Panc1 (cell line): ENCODE measurements at regions of chr9 and their contacts with region 1.

Region 1: GRCh38 chr9:33816327-33817252 is at the start of gene UBE2R2:
- DNase-seq: peak; percentile 59
- ATAC-seq: peak; percentile 85
- H3K4me3 ChIP-seq: peak within 1 kb of the TSS; percentile 71 to 96
- H3K27ac ChIP-seq: peak within 1 kb of the TSS; percentile 98
- H3K4me1 ChIP-seq: peaks cover 41% of the 10 kb centered on the region
- H3K27me3 ChIP-seq: no peaks in the 10 kb centered on the region
- CTCF ChIP-seq: no peak
- total RNA-seq, gene UBE2R2: 67.2 TPM

Region 2: DNA sequence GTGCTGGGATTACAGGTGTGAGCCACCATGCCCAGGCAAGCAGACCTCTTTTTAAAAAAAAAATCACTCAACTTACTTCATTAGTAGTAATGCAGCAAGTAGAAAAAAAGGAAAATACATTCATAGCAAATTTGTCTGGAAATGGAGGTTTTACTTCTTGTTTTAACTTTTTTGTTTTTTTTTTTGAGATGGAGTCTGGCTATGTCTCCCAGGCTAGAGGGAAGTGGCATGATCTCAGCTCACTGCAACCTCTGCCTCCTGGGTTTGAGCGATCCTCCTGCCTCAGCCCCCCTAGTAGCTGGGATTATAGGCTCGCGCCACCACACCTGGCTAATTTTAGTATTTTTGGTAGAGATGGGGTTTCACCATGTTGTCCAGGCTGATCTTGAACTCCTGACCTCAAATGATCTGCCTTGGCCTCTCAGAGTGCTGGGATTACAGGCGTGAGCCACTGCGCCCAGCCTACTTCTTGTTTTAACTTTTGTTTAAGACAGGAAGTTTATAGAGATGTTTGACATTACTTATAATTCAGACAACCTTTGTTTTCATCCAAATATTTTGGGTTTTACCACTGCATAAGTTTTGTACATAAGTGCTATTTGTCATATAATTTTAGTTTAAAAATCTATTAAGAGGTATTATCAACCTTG is 26.8 kb after region 1 on chr9:
- CTCF ChIA-PET with region 1: no interaction called
- POLR2A ChIA-PET with region 1: interaction called, 10 read pairs
- in situ Hi-C with region 1: no loop called
- intact Hi-C with region 1: no loop called
- DNase-seq: no peak
- ATAC-seq: no peak
- H3K4me3 ChIP-seq: no peak overlapping the region
- H3K27ac ChIP-seq: no peak overlapping the region
- H3K4me1 ChIP-seq: peaks cover 5% of the 10 kb centered on the region; the same call in 1 of the 2 replicates
- H3K27me3 ChIP-seq: no peaks in the 10 kb centered on the region
- CTCF ChIP-seq: no peak

Region 3: DNA sequence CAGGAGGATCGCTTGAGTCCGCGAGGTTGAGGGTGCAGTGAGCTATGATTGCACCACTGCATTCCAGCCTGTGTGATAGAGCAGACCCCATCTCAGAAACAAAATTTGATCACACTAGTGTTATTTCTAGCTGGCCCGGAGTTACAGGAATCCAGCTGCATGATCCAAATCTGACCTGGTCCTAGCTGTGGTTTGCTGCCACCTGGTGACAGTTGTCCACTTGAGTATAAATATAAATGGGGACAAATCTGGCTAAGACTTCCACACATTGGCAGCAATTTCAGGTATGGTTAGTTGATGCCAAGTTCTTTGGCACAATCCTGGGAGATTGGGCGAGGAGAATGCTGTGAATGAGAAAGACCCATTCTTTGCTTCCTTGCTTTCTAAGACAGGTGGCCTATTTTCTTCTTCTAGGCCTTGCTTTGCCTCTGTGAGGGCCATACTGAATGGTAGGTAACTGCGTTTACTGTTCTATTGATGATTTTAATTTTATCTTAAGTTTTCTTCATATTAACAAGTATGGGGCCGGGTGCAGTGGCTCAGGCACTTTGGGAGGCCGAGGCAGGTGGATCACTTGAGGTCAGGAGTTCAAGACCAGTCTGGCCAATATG is 35.7 kb after region 1 on chr9:
- CTCF ChIA-PET with region 1: interaction called, 26 read pairs
- POLR2A ChIA-PET with region 1: no interaction called
- in situ Hi-C with region 1: no loop called
- intact Hi-C with region 1: loop called (anchors 5 kb)
- DNase-seq: peak; percentile 47
- ATAC-seq: peak; percentile 86
- H3K4me3 ChIP-seq: no peak overlapping the region
- H3K27ac ChIP-seq: no peak overlapping the region
- H3K4me1 ChIP-seq: peaks cover 30% of the 10 kb centered on the region; the same call in 1 of the 2 replicates
- H3K27me3 ChIP-seq: no peaks in the 10 kb centered on the region
- CTCF ChIP-seq: peak; percentile 87

Region 4: DNA sequence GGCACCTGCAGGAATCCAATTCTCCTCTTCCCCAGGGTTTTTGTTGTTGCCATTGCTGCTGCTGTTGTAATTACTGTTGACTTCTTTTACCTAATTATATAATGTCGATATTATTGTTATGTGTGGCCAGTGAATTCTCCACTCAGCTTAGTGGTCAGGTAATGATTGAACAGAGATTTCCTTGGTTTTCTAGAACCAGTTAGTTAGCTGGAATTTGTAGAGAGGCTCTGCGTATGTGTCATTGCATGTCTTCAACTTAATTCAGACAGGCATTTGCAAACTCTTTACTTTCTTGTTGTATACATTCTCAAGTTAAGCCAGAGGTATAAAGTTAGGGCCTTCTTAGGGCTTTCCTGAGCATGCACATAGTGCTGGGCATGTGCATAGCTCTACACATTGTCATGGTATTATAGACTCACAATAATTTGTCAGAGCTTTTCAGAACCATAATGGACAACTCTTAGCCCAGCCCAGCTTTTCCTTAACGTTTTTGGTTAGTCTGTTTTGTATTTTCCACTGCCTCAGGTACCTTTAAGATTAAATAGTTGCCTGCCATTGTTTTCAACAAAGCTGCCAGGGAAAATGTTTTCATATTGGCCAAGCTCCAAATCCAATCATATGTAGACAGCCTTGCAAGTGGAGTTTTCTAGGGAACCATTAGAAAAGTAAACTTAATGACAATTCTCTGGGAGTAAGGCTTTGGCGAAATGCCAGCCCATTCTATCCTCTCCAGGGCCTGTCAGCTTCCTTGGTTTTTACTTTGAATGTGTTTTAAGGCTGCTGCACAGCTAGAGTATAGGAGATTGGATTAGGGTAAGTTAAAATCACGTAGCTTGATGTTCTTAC is 68.5 kb after region 1 on chr9:
- CTCF ChIA-PET with region 1: interaction called, 13 read pairs
- POLR2A ChIA-PET with region 1: interaction called, 8 read pairs
- in situ Hi-C with region 1: no loop called
- intact Hi-C with region 1: no loop called
- DNase-seq: no peak
- ATAC-seq: no peak; the same call in 1 of the 2 replicates
- H3K4me3 ChIP-seq: no peak overlapping the region
- H3K27ac ChIP-seq: no peak overlapping the region
- H3K4me1 ChIP-seq: peaks cover 22% of the 10 kb centered on the region
- H3K27me3 ChIP-seq: no peaks in the 10 kb centered on the region
- CTCF ChIP-seq: no peak

Region 5: GRCh38 chr9:33919276-33919897 is 102.8 kb after region 1 on chr9:
- CTCF ChIA-PET with region 1: interaction called, 9 read pairs
- POLR2A ChIA-PET with region 1: interaction called, 11 read pairs
- in situ Hi-C with region 1: no loop called
- intact Hi-C with region 1: loop called (anchors 10 kb)
- DNase-seq: no peak
- ATAC-seq: no peak
- H3K4me3 ChIP-seq: no peak overlapping the region
- H3K27ac ChIP-seq: no peak overlapping the region
- H3K4me1 ChIP-seq: peaks cover under 1% of the 10 kb centered on the region; the same call in 1 of the 2 replicates
- H3K27me3 ChIP-seq: no peaks in the 10 kb centered on the region
- CTCF ChIP-seq: no peak

Region 6: GRCh38 chr9:34072868-34073590 is 256.4 kb after region 1 on chr9:
- CTCF ChIA-PET with region 1: no interaction called
- POLR2A ChIA-PET with region 1: no interaction called
- in situ Hi-C with region 1: no loop called
- intact Hi-C with region 1: loop called (anchors 5 kb)
- DNase-seq: no peak
- ATAC-seq: no peak
- H3K4me3 ChIP-seq: no peak overlapping the region
- H3K27ac ChIP-seq: peak overlapping the region; percentile 27
- H3K4me1 ChIP-seq: 0 out of 2 replicates have a peak, but pooled peaks cover 6% of the 10 kb centered on the region
- H3K27me3 ChIP-seq: no peaks in the 10 kb centered on the region
- CTCF ChIP-seq: no peak

Region 7: DNA sequence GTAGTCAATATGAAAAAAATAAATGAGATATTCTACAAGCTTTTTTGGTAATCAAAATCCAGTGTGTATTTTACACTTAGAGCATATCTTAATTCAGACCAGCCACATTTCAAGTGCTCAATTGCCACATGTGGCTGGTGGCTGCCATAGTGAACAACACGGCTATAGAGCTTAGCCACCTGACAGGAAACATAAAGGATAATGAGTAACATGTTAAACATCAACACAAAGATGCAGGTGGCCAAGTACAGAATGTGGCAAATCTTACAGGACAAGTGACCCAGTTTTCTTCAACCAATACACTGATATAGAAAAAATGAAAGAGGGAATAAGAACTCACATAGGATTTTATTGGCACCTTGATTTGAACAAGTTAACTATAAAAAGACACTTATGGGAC is 451.1 kb after region 1 on chr9:
- CTCF ChIA-PET with region 1: interaction called, 16 read pairs
- POLR2A ChIA-PET with region 1: no interaction called
- in situ Hi-C with region 1: no loop called
- intact Hi-C with region 1: no loop called
- DNase-seq: no peak
- ATAC-seq: no peak
- H3K4me3 ChIP-seq: no peak overlapping the region
- H3K27ac ChIP-seq: no peak overlapping the region
- H3K4me1 ChIP-seq: no peaks in the 10 kb centered on the region
- H3K27me3 ChIP-seq: no peaks in the 10 kb centered on the region
- CTCF ChIP-seq: no peak